ENCODE measurements at regions of chr7 and their contacts with region 1.

Region 1: DNA sequence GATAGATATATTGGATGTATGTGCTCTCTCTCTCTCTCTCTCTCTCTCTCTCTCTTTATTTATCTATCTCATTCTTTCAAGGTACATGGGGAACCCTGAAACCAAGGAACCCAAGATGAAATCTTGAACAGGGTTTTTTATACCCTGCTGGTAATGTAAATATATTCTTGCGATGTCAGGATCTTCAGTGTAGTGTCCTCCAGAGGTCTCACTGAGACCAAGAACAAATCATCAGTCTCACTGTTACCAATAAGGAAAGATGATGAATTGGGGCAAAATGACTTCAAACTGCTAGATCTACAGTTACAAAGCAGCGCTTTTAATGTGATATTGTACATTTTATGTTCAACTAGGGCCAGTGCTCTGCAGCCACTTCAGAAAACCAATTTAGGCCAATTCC is 423.5 kb downstream of the ANKRD7 start:
- DNase-seq: no peak
- ATAC-seq: peak; percentile 48; the same call in 1 of the 2 replicates
- H3K4me3 ChIP-seq: no peak overlapping the region
- H3K27ac ChIP-seq: no peak overlapping the region
- H3K4me1 ChIP-seq: no peaks in the 10 kb centered on the region
- H3K27me3 ChIP-seq: no peaks in the 10 kb centered on the region
- CTCF ChIP-seq: no peak

Region 2: GRCh38 chr7:118590107-118590506 is 57.9 kb before region 1 on chr7:
- CTCF ChIA-PET with region 1: no interaction called
- POLR2A ChIA-PET with region 1: no interaction called
- intact Hi-C with region 1: no loop called
- DNase-seq: peak; percentile 12
- ATAC-seq: peak; percentile 33; the same call in 1 of the 2 replicates
- H3K4me3 ChIP-seq: no peak overlapping the region
- H3K27ac ChIP-seq: no peak overlapping the region
- H3K4me1 ChIP-seq: no peaks in the 10 kb centered on the region
- H3K27me3 ChIP-seq: no peaks in the 10 kb centered on the region
- CTCF ChIP-seq: peak; percentile 31; the same call in 1 of the 2 replicates

Region 3: GRCh38 chr7:118602090-118602489 is 45.9 kb before region 1 on chr7:
- CTCF ChIA-PET with region 1: no interaction called
- POLR2A ChIA-PET with region 1: no interaction called
- intact Hi-C with region 1: no loop called
- DNase-seq: no peak
- ATAC-seq: no peak
- H3K4me3 ChIP-seq: no peak overlapping the region
- H3K27ac ChIP-seq: no peak overlapping the region
- H3K4me1 ChIP-seq: no peaks in the 10 kb centered on the region
- H3K27me3 ChIP-seq: no peaks in the 10 kb centered on the region
- CTCF ChIP-seq: no peak

Region 4: GRCh38 chr7:118696879-118697278 is 48.9 kb after region 1 on chr7:
- CTCF ChIA-PET with region 1: no interaction called
- POLR2A ChIA-PET with region 1: no interaction called
- intact Hi-C with region 1: no loop called
- DNase-seq: no peak
- ATAC-seq: no peak
- H3K4me3 ChIP-seq: no peak overlapping the region
- H3K27ac ChIP-seq: no peak overlapping the region
- H3K4me1 ChIP-seq: no peaks in the 10 kb centered on the region
- H3K27me3 ChIP-seq: no peaks in the 10 kb centered on the region
- CTCF ChIP-seq: no peak

Region 5: DNA sequence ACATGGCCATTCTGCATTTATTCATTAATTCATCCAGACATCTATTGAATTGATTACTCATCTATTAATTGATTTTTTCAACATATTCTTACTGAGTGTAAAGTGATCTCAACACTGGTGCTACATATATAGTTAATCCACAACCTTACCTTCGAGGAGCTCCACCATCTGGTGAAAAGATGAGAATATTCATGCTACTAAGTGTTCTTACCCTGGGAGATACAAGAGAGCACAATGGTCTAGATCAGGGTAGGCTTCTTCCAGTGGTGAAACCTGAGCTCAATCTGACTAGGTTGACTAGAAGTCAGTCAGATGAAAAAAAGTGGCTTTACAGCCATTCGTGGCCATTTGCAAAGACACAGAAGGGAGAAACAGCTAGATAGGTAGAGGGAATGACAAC is 83.9 kb after region 1 on chr7:
- CTCF ChIA-PET with region 1: no interaction called
- POLR2A ChIA-PET with region 1: no interaction called
- intact Hi-C with region 1: loop called (anchors 5 kb)
- DNase-seq: no peak
- ATAC-seq: peak; percentile 78
- H3K4me3 ChIP-seq: no peak overlapping the region
- H3K27ac ChIP-seq: no peak overlapping the region
- H3K4me1 ChIP-seq: no peaks in the 10 kb centered on the region
- H3K27me3 ChIP-seq: no peaks in the 10 kb centered on the region
- CTCF ChIP-seq: no peak

Region 6: DNA sequence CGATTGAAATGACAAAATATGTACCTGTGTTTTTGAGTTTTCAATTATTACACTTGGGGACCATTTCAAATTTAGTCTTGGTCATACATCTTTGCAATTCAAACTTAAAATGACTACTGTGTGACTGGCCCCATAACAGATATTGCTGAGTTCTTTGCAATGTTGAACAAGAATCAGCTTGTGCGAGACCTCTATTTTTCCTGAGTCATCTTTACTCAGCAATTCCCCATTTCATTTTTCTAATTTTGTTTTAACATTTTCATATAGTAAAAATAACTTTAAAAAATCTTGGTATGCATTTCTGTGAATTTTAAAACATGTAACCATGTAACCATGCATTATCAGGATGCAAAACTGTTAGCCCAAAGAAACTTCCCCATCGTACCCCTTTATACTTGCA is 254.6 kb after region 1 on chr7:
- CTCF ChIA-PET with region 1: no interaction called
- POLR2A ChIA-PET with region 1: no interaction called
- intact Hi-C with region 1: loop called (anchors 10 kb)
- DNase-seq: no peak
- ATAC-seq: no peak
- H3K4me3 ChIP-seq: no peak overlapping the region
- H3K27ac ChIP-seq: no peak overlapping the region
- H3K4me1 ChIP-seq: no peaks in the 10 kb centered on the region
- H3K27me3 ChIP-seq: no peaks in the 10 kb centered on the region
- CTCF ChIP-seq: no peak